ENCODE measurements at regions of chr7 and their contacts with region 1.

Region 1: GRCh38 chr7:150898475-150899011 is 46.2 kb downstream of the AOC1 start:
- DNase-seq: peak; percentile 95
- H3K4me3 ChIP-seq: peak overlapping the region in 1 of 8 donors; percentile 10
- H3K27ac ChIP-seq: peak overlapping the region in 5 of 8 donors; percentile 31 to 77 (median 66)
- H3K4me1 ChIP-seq: peaks cover 0 to 36% (median 25%) of the 10 kb centered on the region in 6 donors
- H3K27me3 ChIP-seq: peaks cover 0 to 51% (median 0%) of the 10 kb centered on the region in 7 donors
- CTCF ChIP-seq: peak; percentile 87 to 96 (median 94)
- POLR2A ChIP-seq: no peak

Region 2: GRCh38 chr7:150962553-150963399 is 64.2 kb after region 1 on chr7:
- intact Hi-C with region 1: no loop called
- DNase-seq: peak; percentile 85
- H3K4me3 ChIP-seq: no peak overlapping the region
- H3K27ac ChIP-seq: peak overlapping the region in 4 of 8 donors; percentile 34 to 63 (median 56)
- H3K4me1 ChIP-seq: peaks cover 0 to 47% (median 15%) of the 10 kb centered on the region in 6 donors
- H3K27me3 ChIP-seq: peaks cover 0 to 86% (median 14%) of the 10 kb centered on the region in 7 donors
- CTCF ChIP-seq: peak; percentile 79 to 92 (median 85)
- POLR2A ChIP-seq: no peak

Region 3: GRCh38 chr7:150986099-150986512 is 87.6 kb after region 1 on chr7:
- intact Hi-C with region 1: loop called (anchors 2 kb)
- DNase-seq: no peak
- H3K4me3 ChIP-seq: no peak overlapping the region
- H3K27ac ChIP-seq: no peak overlapping the region
- H3K4me1 ChIP-seq: peaks cover 9 to 50% (median 37%) of the 10 kb centered on the region in 6 donors
- H3K27me3 ChIP-seq: peaks cover 0 to 73% (median 8%) of the 10 kb centered on the region in 7 donors
- CTCF ChIP-seq: peak in 10 of 11 experiments; percentile 31 to 83 (median 69)
- POLR2A ChIP-seq: no peak

Region 4: DNA sequence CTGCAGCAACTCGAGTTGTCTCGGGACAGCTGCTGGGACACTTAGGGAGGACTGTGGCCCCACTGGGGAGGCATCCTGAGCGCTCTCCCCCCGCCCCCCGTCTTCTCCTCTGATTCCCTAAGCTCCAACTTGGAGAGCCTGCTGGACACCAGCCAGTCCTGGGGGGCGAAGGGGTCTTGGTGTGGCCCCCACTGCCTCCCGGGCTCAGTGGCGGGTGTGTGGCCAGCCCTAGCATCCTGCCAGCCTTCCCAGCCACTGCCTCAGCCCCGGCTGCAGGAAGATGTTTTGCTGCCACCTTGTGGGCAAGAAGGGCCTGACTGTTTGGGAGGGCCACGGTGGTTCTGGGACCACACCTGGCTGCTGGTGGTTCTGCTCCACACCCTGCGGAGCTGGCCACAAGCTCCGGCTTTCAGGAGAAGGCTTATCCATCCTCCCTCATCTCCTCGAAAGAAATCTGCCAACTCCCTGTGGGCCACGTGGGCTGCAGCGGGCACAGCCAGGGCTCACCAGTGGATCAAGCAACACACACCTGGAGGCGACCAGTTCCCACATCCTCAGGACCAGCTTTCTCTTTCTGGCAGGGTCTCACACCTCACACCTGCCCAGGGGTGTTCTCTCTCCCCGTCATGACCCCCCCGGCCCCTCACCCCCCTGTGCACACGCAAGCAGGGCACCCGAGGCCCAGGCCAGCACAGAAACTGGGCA is 212.6 kb after region 1 on chr7:
- intact Hi-C with region 1: loop called (anchors 5 kb)
- DNase-seq: peak; percentile 92
- H3K4me3 ChIP-seq: no peak overlapping the region
- H3K27ac ChIP-seq: no peak overlapping the region
- H3K4me1 ChIP-seq: peaks cover 0 to 40% (median 20%) of the 10 kb centered on the region in 6 donors
- H3K27me3 ChIP-seq: peaks cover 0 to 20% (median 0%) of the 10 kb centered on the region in 7 donors
- CTCF ChIP-seq: peak; percentile 74 to 95 (median 91)
- POLR2A ChIP-seq: no peak